Endothelial cell of umbilical vein (primary cell): ENCODE measurements at regions of chr1 and their contacts with region 1.

Region 1: DNA sequence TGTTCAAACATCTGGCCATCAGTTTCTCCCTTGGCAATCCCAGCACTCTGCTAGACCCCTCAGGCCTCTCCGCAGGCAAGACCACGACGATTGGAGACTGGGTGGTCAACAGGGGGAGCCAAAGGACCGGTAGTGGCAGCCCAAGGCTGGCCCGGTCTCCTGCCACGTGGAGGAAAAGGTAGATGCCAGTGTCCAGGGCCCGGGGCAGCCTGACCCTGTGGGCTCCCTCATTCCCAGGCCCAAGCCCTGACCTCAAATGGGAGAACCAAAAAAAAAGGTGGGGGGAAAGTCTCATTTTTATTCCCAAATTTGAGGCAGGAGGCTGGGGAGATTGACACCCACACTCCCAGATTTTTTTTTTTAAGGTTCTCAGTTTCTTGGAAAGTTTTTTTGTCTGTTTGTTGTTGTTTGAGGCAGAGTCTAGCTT is 24.8 kb downstream of the S100A6 start:
- DNase-seq: peak; percentile 71
- H3K4me3 ChIP-seq: no peak overlapping the region
- H3K27ac ChIP-seq: no peak overlapping the region
- H3K4me1 ChIP-seq: no peaks in the 10 kb centered on the region
- H3K27me3 ChIP-seq: no peaks in the 10 kb centered on the region
- CTCF ChIP-seq: peak; percentile 94
- POLR2A ChIP-seq: no peak

Region 2: GRCh38 chr1:153277817-153278216 is 233.2 kb before region 1 on chr1:
- CTCF ChIA-PET with region 1: no interaction called
- POLR2A ChIA-PET with region 1: no interaction called
- dilution Hi-C with region 1: no loop called
- intact Hi-C with region 1: no loop called
- DNase-seq: no peak
- H3K4me3 ChIP-seq: no peak overlapping the region
- H3K27ac ChIP-seq: no peak overlapping the region
- H3K4me1 ChIP-seq: no peaks in the 10 kb centered on the region
- H3K27me3 ChIP-seq: no peaks in the 10 kb centered on the region
- CTCF ChIP-seq: peak; percentile 31 to 43
- POLR2A ChIP-seq: no peak

Region 3: GRCh38 chr1:153494976-153495535 is 15.9 kb before region 1 on chr1:
- CTCF ChIA-PET with region 1: interaction called, 12 read pairs
- POLR2A ChIA-PET with region 1: no interaction called
- dilution Hi-C with region 1: no loop called
- intact Hi-C with region 1: no loop called
- DNase-seq: peak; percentile 60
- H3K4me3 ChIP-seq: no peak overlapping the region
- H3K27ac ChIP-seq: no peak overlapping the region
- H3K4me1 ChIP-seq: no peaks in the 10 kb centered on the region
- H3K27me3 ChIP-seq: peaks cover 7 to 16% of the 10 kb centered on the region in 2 experiments
- CTCF ChIP-seq: peak; percentile 80 to 88
- POLR2A ChIP-seq: no peak

Region 4: DNA sequence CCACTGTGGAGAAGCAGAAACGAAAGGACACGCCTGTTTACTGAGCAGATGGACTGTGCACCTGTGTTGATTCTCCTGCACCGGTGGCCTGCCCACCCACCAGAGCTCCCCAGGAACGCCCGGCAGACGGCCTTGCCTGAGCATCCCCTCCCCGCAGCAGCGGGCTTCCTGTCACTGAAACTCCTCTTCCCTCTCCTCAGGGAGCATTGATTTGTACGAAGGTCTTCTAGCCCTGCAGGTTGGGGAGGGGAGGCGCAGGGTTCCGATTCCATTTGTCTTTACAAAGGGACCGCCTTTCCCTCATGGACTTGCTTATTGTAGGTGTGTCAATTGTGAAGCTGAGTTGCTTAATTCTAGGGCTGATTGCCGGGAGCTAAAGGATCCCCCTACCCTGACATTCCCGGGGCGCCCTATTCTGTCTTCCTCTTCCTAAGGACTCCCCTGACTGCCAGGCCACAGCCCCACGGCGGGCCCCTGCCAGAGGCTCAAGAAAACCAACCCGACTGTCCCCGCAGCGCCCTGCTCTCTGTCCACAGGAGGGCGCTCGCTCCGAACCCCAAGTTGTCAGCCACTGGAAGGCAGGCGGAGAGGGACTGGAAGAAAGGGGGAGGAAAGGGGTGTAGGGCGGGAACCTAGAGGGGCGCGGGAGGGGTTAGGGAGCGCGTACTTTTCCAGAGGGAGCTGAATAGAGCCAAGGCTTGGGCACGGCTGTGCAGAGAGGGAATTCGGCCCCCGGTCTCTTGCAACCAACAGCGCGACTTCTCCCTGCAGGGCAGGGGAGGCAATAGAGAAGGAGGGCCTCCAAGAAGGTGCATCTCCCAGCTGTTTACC is 22.0 kb after region 1 on chr1:
- CTCF ChIA-PET with region 1: interaction called, 63 read pairs
- POLR2A ChIA-PET with region 1: no interaction called
- dilution Hi-C with region 1: no loop called
- intact Hi-C with region 1: loop called (anchors 1 kb)
- DNase-seq: peak; percentile 85
- H3K4me3 ChIP-seq: peak overlapping the region in 2 of 3 experiments; percentile 5 to 81
- H3K27ac ChIP-seq: peak overlapping the region; percentile 96
- H3K4me1 ChIP-seq: peaks cover 43% of the 10 kb centered on the region
- H3K27me3 ChIP-seq: no peaks in the 10 kb centered on the region
- CTCF ChIP-seq: peak; percentile 90
- POLR2A ChIP-seq: no peak

Region 5: DNA sequence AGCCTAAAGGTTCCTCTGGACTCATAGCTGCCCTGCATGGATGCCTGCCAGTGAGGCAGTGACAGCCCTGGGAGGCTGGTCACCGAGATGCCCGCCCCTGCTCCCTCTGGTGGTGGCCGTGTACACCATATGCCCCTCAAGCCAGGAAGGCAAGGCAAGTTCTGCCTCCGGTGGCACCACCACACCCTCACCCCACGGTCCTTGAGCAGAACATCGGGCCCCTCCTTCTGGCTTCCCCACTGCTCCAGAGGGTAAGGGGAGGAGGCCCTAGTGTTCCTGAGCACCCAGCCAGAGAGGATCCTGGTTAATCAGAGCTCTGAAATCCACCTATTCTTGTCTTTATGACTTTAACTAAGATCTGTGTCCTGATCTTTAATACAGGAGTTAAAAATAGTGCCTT is 106.7 kb after region 1 on chr1:
- CTCF ChIA-PET with region 1: interaction called, 15 read pairs
- POLR2A ChIA-PET with region 1: no interaction called
- dilution Hi-C with region 1: no loop called
- intact Hi-C with region 1: no loop called
- DNase-seq: peak; percentile 57
- H3K4me3 ChIP-seq: no peak overlapping the region
- H3K27ac ChIP-seq: no peak overlapping the region
- H3K4me1 ChIP-seq: no peaks in the 10 kb centered on the region
- H3K27me3 ChIP-seq: no peaks in the 10 kb centered on the region
- CTCF ChIP-seq: peak; percentile 65 to 75
- POLR2A ChIP-seq: peak; percentile 55

Region 6: GRCh38 chr1:153633716-153634665 is 123.0 kb after region 1 on chr1 and contains the start of gene CHTOP:
- CTCF ChIA-PET with region 1: interaction called, 6 read pairs
- POLR2A ChIA-PET with region 1: no interaction called
- dilution Hi-C with region 1: no loop called
- intact Hi-C with region 1: loop called (anchors 1 kb)
- DNase-seq: peak; percentile 100
- H3K4me3 ChIP-seq: peak within 1 kb of the TSS; percentile 65 to 96 (median 93)
- H3K27ac ChIP-seq: peak within 1 kb of the TSS; percentile 94
- H3K4me1 ChIP-seq: peaks cover 11% of the 10 kb centered on the region
- H3K27me3 ChIP-seq: no peaks in the 10 kb centered on the region
- CTCF ChIP-seq: no peak
- POLR2A ChIP-seq: peak; percentile 78
- total RNA-seq, gene CHTOP: 72.1 and 74.4 TPM in 2 replicates

Region 7: DNA sequence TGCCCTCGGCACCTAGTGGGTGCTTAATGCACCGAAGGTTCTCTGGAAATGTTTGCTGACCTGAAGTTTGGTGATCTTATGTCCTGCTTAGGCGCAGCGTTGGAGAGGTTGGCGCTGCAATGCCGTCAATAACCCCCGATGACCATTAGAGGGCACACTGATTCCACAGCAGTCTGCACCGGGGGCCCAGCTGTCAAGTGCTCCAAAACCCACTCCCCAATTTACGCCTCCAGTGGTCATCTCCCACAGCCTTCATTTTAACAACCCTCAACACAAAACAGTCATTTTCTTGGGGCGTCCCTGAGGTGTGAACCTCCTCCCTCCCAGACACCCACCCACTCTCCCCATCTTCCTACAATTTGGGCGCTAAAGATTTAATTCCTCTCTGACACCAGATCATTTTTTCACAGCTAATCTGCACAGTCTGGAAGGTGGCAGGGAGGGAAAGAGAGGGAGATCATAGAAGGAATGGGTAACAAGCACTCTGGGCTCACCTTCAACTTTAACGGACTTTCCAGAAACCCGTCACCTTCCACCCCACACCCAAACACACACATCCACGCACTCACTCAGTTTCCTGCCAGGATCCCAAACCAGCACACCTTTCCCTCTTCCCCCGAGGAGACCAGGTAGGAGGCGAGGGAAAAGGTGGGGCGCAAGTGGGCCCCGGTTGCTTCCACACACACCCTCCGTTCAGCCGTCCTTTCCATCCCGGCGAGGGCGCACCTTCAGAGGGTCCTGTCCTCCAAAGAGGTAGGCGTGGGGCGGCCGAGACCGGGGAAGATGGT is 166.9 kb after region 1 on chr1:
- CTCF ChIA-PET with region 1: no interaction called
- POLR2A ChIA-PET with region 1: no interaction called
- dilution Hi-C with region 1: no loop called
- intact Hi-C with region 1: loop called (anchors 1 kb)
- DNase-seq: peak; percentile 72
- H3K4me3 ChIP-seq: peak overlapping the region; percentile 15 to 44 (median 22)
- H3K27ac ChIP-seq: no peak overlapping the region
- H3K4me1 ChIP-seq: peaks cover 11% of the 10 kb centered on the region
- H3K27me3 ChIP-seq: peaks cover 4 to 5% of the 10 kb centered on the region in 2 experiments
- CTCF ChIP-seq: peak; percentile 91 to 92
- POLR2A ChIP-seq: no peak

Region 8: DNA sequence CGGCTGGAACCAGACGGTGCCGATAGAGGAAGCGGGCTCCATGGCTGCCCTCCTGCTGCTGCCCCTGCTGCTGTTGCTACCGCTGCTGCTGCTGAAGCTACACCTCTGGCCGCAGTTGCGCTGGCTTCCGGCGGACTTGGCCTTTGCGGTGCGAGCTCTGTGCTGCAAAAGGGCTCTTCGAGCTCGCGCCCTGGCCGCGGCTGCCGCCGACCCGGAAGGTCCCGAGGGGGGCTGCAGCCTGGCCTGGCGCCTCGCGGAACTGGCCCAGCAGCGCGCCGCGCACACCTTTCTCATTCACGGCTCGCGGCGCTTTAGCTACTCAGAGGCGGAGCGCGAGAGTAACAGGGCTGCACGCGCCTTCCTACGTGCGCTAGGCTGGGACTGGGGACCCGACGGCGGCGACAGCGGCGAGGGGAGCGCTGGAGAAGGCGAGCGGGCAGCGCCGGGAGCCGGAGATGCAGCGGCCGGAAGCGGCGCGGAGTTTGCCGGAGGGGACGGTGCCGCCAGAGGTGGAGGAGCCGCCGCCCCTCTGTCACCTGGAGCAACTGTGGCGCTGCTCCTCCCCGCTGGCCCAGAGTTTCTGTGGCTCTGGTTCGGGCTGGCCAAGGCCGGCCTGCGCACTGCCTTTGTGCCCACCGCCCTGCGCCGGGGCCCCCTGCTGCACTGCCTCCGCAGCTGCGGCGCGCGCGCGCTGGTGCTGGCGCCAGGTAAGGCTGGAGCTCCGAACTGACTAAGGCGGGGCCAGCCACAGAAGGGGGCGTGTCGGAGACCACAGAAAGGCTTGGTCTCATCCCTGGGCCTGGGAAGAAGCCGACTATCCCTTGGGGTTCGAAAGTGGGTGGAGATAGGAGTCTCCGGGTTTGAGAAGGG is 264.7 kb after region 1 on chr1:
- CTCF ChIA-PET with region 1: no interaction called
- POLR2A ChIA-PET with region 1: no interaction called
- dilution Hi-C with region 1: no loop called
- intact Hi-C with region 1: loop called (anchors 2 kb)
- DNase-seq: peak; percentile 58
- H3K4me3 ChIP-seq: peak overlapping the region; percentile 25 to 63 (median 49)
- H3K27ac ChIP-seq: no peak overlapping the region
- H3K4me1 ChIP-seq: peaks cover 54% of the 10 kb centered on the region
- H3K27me3 ChIP-seq: no peaks in the 10 kb centered on the region
- CTCF ChIP-seq: no peak
- POLR2A ChIP-seq: no peak